Tibial artery (tissue), 4 donors: ENCODE measurements at regions of chr1 and their contacts with region 1.

Region 1: GRCh38 chr1:17611975-17612374 is 72.5 kb downstream of the ARHGEF10L start:
- DNase-seq: no peak
- H3K4me3 ChIP-seq: no peak overlapping the region
- H3K27ac ChIP-seq: peak overlapping the region in 1 of 2 donors; percentile 100
- H3K4me1 ChIP-seq: peaks cover 0 to 73% (median 14%) of the 10 kb centered on the region in 4 donors
- H3K27me3 ChIP-seq: no peaks in the 10 kb centered on the region
- CTCF ChIP-seq: no peak

Region 2: GRCh38 chr1:17661546-17662157 is 49.7 kb after region 1 on chr1:
- intact Hi-C with region 1: no loop called
- DNase-seq: peak in 1 of 2 donors; percentile 80
- H3K4me3 ChIP-seq: no peak overlapping the region
- H3K27ac ChIP-seq: no peak overlapping the region
- H3K4me1 ChIP-seq: peaks cover 0 to 5% (median 2%) of the 10 kb centered on the region in 4 donors
- H3K27me3 ChIP-seq: no peaks in the 10 kb centered on the region
- CTCF ChIP-seq: peak; percentile 77 to 80

Region 3: DNA sequence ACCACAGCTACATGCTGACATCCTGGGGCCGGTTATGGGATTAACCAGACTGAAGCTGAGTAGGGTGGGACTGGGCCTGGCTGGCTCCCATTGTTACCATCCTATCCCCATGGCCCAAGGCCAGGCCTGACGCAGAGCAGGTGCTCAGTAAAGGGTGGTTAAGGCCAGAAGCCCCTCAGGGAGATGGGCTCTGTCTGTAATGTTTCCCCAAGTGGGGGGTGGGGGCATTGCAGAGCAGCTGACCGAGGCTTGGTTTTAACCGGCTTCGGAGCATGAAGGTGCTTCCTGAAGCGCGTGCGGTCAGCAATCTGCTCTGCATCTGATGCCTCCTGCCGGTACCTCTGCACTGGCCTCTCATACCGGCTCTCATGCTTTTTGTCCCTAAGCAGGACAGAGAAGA is 59.8 kb after region 1 on chr1:
- intact Hi-C with region 1: loop called (anchors 2 kb)
- DNase-seq: no peak
- H3K4me3 ChIP-seq: no peak overlapping the region
- H3K27ac ChIP-seq: peak overlapping the region; percentile 45 to 62
- H3K4me1 ChIP-seq: peaks cover 0 to 98% (median 42%) of the 10 kb centered on the region in 4 donors
- H3K27me3 ChIP-seq: no peaks in the 10 kb centered on the region
- CTCF ChIP-seq: peak in 1 of 2 experiments; percentile 22

Region 4: GRCh38 chr1:18941221-18942141 is 1329.5 kb after region 1 on chr1:
- intact Hi-C with region 1: no loop called
- DNase-seq: no peak
- H3K4me3 ChIP-seq: no peak overlapping the region
- H3K27ac ChIP-seq: peak overlapping the region; percentile 23 to 25
- H3K4me1 ChIP-seq: peaks cover 15 to 96% (median 83%) of the 10 kb centered on the region in 4 donors
- H3K27me3 ChIP-seq: no peaks in the 10 kb centered on the region
- CTCF ChIP-seq: no peak